K562 (cell line): ENCODE measurements at regions of chr7 and their contacts with region 1.

Region 1: DNA sequence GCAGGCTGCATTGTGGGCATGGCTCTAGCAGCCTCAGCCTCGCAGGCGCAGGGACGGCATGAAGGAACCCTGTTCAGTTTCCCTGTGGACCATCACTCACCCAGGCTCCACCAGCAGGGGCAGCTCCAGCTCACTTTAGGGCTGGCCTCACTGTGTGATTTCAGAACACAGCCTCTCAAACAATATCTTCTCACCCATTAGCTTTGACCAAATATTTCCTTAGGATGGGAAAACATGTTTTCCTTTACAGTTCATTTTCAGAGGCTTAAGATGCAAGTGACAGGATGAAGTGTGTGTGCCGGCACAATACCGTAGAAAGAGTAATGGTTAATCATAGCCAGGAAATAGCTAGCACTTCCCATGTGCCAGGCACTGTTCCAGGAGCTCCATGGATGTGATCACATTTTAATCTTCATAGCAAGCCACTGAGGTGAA is 58.2 kb downstream of the LANCL2 start:
- DNase-seq: no peak
- ATAC-seq: no peak
- H3K4me3 ChIP-seq: no peak overlapping the region
- H3K27ac ChIP-seq: no peak overlapping the region
- H3K4me1 ChIP-seq: peaks cover 4 to 9% of the 10 kb centered on the region in 2 experiments; a peak in 4 of 5 replicates
- H3K27me3 ChIP-seq: no peaks in the 10 kb centered on the region
- CTCF ChIP-seq: no peak
- EP300 ChIP-seq: no peak
- POLR2A ChIP-seq: no peak
- RAD21 ChIP-seq: no peak

Region 2: DNA sequence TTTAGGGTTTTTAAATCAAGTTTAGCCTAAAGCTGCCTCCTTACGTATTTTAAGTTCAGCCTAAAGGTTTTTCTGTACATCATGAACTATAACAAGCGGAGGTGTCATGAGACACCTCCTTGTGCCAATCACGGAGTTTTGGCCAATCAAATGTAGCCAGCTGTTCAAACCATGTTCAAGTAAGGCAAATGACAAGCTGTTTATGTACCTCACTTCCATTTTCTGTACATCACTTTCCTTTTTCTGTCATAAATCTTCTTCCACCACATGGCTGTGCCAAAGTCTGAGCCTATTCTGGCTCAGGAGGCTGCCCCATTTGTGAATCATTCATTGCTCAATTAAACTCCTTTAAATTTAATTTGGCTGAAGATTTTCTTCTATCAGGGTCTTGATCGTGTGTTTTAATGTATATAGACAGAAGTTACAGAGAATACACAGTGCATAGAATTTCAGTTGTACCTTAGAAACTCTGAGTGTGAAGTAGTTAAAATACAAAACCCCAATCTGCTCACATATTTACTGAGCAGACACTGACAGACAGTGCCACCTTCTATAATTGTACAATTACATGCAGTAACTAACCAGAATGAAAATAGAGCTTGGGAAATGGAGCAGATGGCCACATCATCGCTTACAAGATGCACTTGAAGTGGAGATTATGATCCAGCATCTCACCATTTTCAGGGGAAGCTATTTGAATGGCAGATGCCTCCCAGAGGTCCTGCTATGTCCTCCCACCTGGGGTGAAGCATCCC is 135.0 kb before region 1 on chr7:
- CTCF ChIA-PET with region 1: no interaction called
- POLR2A ChIA-PET with region 1: no interaction called
- in situ Hi-C with region 1: loop called (anchors 5 kb)
- intact Hi-C with region 1: no loop called
- DNase-seq: no peak
- ATAC-seq: no peak
- H3K4me3 ChIP-seq: no peak overlapping the region
- H3K27ac ChIP-seq: no peak overlapping the region
- H3K4me1 ChIP-seq: no peaks in the 10 kb centered on the region
- H3K27me3 ChIP-seq: no peaks in the 10 kb centered on the region
- CTCF ChIP-seq: no peak
- EP300 ChIP-seq: no peak
- POLR2A ChIP-seq: no peak
- RAD21 ChIP-seq: no peak